PC-9 (cell line): ENCODE measurements at regions of chr2 and their contacts with region 1.

Region 1: DNA sequence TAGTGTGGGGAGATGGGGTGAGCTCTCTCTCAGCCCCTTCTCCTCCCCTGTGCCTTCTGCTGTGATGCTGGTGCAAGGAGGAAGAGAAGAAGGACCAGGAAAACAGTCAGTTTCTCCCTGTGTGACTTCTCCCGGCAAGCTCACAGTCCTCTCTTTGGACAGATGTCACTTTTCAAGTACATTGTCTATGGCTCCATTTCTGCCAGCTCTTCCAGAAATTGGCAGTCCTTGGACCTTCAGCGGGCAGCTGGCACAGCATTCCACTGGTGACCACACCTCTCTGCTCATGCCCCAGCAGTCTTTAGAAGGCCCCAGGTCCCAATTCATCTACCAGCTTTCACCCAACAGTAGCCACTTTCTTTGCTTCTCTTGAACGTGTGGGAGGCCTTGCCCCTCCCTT is 63.9 kb downstream of the AOX1 start:
- DNase-seq: no peak
- H3K4me3 ChIP-seq: no peak overlapping the region
- H3K27ac ChIP-seq: peak overlapping the region; percentile 82; the same call in 1 of the 2 replicates
- H3K4me1 ChIP-seq: peaks cover 27% of the 10 kb centered on the region
- H3K27me3 ChIP-seq: no peaks in the 10 kb centered on the region
- CTCF ChIP-seq: no peak

Region 2: GRCh38 chr2:200454927-200455801 is 194.6 kb before region 1 on chr2:
- CTCF ChIA-PET with region 1: no interaction called
- POLR2A ChIA-PET with region 1: no interaction called
- intact Hi-C with region 1: no loop called
- DNase-seq: peak; percentile 29 to 48
- H3K4me3 ChIP-seq: no peak overlapping the region
- H3K27ac ChIP-seq: no peak overlapping the region
- H3K4me1 ChIP-seq: 0 out of 2 replicates have a peak, but pooled peaks cover 7% of the 10 kb centered on the region
- H3K27me3 ChIP-seq: no peaks in the 10 kb centered on the region
- CTCF ChIP-seq: no peak

Region 3: GRCh38 chr2:200509612-200510433 is 139.9 kb before region 1 on chr2 and contains the start of gene KCTD18:
- CTCF ChIA-PET with region 1: no interaction called
- POLR2A ChIA-PET with region 1: no interaction called
- intact Hi-C with region 1: no loop called
- DNase-seq: peak; percentile 68 to 90
- H3K4me3 ChIP-seq: peak within 1 kb of the TSS; percentile 78
- H3K27ac ChIP-seq: peak within 1 kb of the TSS; percentile 24; the same call in 1 of the 2 replicates
- H3K4me1 ChIP-seq: peaks cover 15% of the 10 kb centered on the region; the same call in 1 of the 2 replicates
- H3K27me3 ChIP-seq: no peaks in the 10 kb centered on the region
- CTCF ChIP-seq: peak; percentile 72
- total RNA-seq, gene KCTD18: 19.6 and 24.0 TPM in 2 replicates

Region 4: GRCh38 chr2:200592406-200593075 is 57.2 kb before region 1 on chr2:
- CTCF ChIA-PET with region 1: no interaction called
- POLR2A ChIA-PET with region 1: interaction called, 13 read pairs
- intact Hi-C with region 1: no loop called
- DNase-seq: no peak
- H3K4me3 ChIP-seq: no peak overlapping the region
- H3K27ac ChIP-seq: no peak overlapping the region
- H3K4me1 ChIP-seq: peaks cover 10% of the 10 kb centered on the region; the same call in 1 of the 2 replicates
- H3K27me3 ChIP-seq: no peaks in the 10 kb centered on the region
- CTCF ChIP-seq: no peak

Region 5: GRCh38 chr2:200725596-200725995 is 75.9 kb after region 1 on chr2:
- CTCF ChIA-PET with region 1: no interaction called
- POLR2A ChIA-PET with region 1: no interaction called
- intact Hi-C with region 1: no loop called
- DNase-seq: no peak
- H3K4me3 ChIP-seq: no peak overlapping the region
- H3K27ac ChIP-seq: no peak overlapping the region
- H3K4me1 ChIP-seq: peaks cover 12% of the 10 kb centered on the region
- H3K27me3 ChIP-seq: no peaks in the 10 kb centered on the region
- CTCF ChIP-seq: no peak